Heart right ventricle (tissue), 16 donors: ENCODE measurements at regions of chr9 and their contacts with region 1.

Region 1: DNA sequence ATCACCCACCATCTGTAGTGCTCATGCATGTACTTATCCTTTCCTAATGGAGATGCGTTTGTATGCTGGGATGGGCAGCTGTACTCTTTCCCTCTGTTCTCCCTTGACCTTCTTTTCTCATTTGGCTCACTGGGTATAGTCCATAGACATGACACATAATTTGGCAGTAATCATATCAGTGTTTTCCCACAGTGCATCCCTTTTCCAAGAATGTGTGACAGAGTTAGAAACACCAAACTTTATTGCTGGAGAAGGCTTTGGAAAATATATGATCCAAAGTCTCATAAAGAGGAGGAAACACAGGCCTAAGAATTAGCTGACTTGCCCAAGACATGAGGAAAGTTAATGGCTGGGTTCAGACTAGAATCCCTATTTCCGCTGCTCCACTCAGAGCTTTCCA is 1233.4 kb upstream of the DMAC1 start:
- DNase-seq: no peak
- ATAC-seq: peak; percentile 23 to 70 (median 58)
- H3K4me3 ChIP-seq: no peak overlapping the region
- H3K27ac ChIP-seq: peak overlapping the region in 1 of 10 donors; percentile 8
- H3K4me1 ChIP-seq: no peaks in the 10 kb centered on the region
- H3K27me3 ChIP-seq: no peaks in the 10 kb centered on the region
- CTCF ChIP-seq: no peak

Region 2: DNA sequence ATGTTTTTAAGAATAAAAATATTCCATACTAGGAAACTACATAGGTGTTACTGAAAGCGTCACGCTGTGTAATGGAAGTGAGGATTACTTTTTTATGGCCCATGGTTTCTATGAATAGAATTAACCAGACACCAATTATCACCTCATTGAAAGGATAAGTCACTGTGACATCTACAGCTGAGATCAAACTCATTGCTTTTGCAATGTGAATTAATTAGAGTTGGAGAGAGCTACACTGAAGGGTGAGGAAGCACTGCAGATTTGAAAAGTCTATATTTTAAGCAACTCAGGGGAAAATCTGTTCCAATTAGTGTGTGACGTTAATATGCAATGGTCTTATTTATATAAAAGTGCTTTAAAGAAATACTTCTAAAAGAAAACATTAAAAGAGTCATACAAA is 66.6 kb after region 1 on chr9:
- intact Hi-C with region 1: loop called in 1 of 10 experiments (anchors 10 kb)
- DNase-seq: no peak
- ATAC-seq: no peak
- H3K4me3 ChIP-seq: no peak overlapping the region
- H3K27ac ChIP-seq: no peak overlapping the region
- H3K4me1 ChIP-seq: no peaks in the 10 kb centered on the region
- H3K27me3 ChIP-seq: no peaks in the 10 kb centered on the region
- CTCF ChIP-seq: no peak

Region 3: GRCh38 chr9:9117866-9118265 is 84.8 kb after region 1 on chr9:
- intact Hi-C with region 1: no loop called
- DNase-seq: no peak
- ATAC-seq: no peak
- H3K4me3 ChIP-seq: no peak overlapping the region
- H3K27ac ChIP-seq: no peak overlapping the region
- H3K4me1 ChIP-seq: no peaks in the 10 kb centered on the region
- H3K27me3 ChIP-seq: no peaks in the 10 kb centered on the region
- CTCF ChIP-seq: no peak

Region 4: DNA sequence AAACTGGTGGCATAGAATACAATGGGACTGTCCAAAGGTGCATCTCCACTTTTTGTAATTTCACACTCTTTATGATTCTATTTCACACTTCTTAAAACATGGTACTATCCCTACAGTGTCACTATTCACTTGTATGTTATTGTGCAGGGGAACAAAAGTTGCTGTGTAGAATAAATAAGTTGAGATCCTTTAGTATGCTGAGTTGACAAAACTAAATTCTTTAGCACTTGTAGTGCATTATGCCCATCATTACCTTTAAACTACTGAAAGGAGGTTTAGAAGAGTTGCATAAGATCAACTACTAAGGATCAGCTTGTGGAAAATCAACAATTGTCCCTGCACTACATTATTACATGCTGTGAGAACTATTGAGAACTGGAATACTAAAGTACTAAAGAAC is 198.9 kb after region 1 on chr9:
- intact Hi-C with region 1: no loop called
- DNase-seq: no peak
- ATAC-seq: no peak
- H3K4me3 ChIP-seq: no peak overlapping the region
- H3K27ac ChIP-seq: no peak overlapping the region
- H3K4me1 ChIP-seq: no peaks in the 10 kb centered on the region
- H3K27me3 ChIP-seq: no peaks in the 10 kb centered on the region
- CTCF ChIP-seq: no peak